Activated CD4-positive, alpha-beta memory T cell treated with anti-CD3 and anti-CD28 coated beads for 36 hours (primary cell): ENCODE measurements at regions of chr7 and their contacts with region 1.

Region 1: DNA sequence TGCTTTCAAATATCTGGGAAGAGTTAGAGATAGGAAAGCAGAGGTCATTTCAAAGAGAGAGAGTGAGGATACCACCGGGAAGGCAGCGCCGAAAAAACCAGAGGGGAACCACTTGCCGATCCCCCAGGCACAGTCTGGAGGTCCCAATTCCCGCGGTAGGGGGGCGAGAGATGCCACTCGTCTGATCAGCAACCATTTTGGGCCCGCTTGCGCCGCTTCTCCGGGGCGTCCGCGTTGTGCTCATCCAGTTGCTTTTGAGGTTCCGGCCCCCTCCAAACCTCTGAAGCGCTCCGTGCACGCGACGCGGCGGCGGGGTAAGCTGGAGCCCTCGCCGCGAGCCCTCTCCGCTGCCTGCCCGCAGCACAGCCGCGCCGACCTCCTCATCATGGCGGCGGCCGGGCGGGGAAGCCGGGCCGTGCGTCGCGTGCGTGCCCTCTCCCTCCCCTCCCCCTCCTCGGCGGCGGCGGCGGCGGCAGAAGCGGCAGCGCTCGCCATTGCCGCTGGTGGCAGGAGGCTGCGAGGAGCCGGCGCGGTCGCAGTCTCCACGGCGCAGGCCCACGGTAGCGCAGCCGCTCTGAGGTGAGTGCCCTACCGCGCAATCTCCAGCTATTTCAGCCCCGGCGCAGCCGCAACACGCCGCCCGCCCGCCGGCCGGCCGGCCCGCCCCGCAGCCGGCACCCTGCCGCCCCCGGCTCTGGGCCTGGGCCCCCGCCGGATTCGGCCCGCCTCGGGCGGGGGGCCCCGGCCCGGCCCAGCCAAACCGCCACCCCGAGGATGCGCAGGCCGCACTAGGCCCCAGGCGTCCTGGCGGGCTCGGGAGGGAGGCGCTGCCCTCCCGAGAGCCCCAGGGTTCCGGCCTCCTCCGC is at the start of gene NRF1:
- DNase-seq: peak; percentile 92
- H3K4me3 Mint-ChIP-seq: peak within 1 kb of the TSS; percentile 95
- H3K27ac Mint-ChIP-seq: peak within 1 kb of the TSS; percentile 97
- H3K4me1 Mint-ChIP-seq: peaks cover 53% of the 10 kb centered on the region
- H3K27me3 Mint-ChIP-seq: no peaks in the 10 kb centered on the region
- total RNA-seq, gene NRF1: 19.9 to 20.4 TPM

Region 2: DNA sequence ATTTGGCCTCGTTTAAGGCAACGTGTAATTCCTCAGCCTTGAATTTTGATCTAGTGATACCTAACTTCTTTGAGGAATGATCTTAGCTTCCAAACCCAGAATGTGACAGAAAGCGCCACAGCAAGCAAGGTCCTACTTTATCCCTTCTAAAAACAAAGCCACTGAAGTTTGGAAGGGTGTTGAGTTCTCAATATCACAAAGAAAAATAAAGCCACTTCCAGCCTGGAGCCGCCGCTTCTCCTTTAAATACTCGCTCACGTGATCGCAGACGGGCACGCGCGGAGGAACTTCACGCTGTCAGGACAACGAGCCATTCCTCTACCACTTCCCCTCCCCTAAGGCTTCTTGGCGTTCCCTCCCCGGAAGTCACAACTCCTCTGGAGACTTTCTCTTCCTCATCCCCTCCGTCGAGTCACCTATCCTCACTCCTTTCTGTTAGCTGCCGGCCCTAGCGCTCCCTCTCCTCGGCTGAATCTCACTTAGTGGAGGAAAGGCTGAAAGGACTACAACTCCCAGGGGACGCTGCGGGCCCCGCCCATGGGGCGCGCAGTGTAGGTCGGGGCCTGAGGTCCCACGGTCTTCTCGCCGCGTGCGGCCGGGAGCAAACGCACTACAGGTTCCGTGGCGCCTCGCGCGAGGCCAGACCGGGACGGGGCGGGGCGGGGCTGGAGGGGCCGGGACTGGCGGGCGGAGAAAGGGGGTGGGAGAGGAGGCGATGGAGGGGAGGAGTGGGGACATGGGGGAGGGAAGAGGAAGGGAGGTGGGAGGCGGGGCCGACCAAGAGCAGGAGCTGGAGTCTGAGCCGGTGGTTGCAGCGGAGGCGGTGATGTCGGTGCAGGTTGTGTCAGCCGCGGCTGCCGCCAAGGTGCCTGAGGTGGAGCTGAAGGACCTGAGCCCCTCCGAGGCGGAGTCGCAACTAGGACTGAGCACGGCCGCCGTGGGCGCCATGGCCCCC is 387.0 kb before region 1 on chr7 and contains the start of gene AHCYL2:
- CTCF ChIA-PET with region 1: no interaction called
- POLR2A ChIA-PET with region 1: no interaction called
- intact Hi-C with region 1: loop called (anchors 5 kb)
- DNase-seq: peak; percentile 99
- H3K4me3 Mint-ChIP-seq: peak within 1 kb of the TSS; percentile 87
- H3K27ac Mint-ChIP-seq: peak within 1 kb of the TSS; percentile 91
- H3K4me1 Mint-ChIP-seq: peaks cover 27% of the 10 kb centered on the region
- H3K27me3 Mint-ChIP-seq: no peaks in the 10 kb centered on the region
- total RNA-seq, gene AHCYL2: 16.4 to 17.1 TPM

Region 3: DNA sequence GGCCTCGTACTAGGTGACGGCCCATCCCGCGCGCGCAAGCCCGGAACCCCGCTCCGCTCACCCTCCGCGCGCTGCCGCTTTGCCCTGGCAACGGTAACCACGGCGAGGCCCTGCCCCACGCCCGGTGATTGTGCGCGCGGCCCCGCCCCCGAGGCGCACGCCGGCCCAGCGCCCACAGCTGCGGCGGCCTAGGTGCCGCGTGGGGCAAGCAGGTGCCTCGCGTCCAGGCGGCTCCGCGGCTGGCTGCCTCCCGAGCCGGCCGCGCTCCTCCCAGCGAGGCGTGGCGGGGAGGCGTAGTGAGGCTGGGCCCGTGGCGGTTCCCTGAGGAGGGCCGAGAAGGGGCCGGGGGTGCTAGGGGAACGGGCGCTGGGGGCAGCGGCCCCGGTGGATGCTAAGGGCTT is 109.1 kb before region 1 on chr7 and contains the start of gene SMKR1:
- CTCF ChIA-PET with region 1: interaction called, 4 read pairs
- POLR2A ChIA-PET with region 1: interaction called, 3 read pairs
- intact Hi-C with region 1: loop called (anchors 5 kb)
- DNase-seq: peak; percentile 91
- H3K4me3 Mint-ChIP-seq: peak within 1 kb of the TSS; percentile 75
- H3K27ac Mint-ChIP-seq: peak within 1 kb of the TSS; percentile 56
- H3K4me1 Mint-ChIP-seq: peaks cover 9% of the 10 kb centered on the region
- H3K27me3 Mint-ChIP-seq: no peaks in the 10 kb centered on the region
- total RNA-seq, gene SMKR1: 1.5 to 2.0 TPM

Region 4: DNA sequence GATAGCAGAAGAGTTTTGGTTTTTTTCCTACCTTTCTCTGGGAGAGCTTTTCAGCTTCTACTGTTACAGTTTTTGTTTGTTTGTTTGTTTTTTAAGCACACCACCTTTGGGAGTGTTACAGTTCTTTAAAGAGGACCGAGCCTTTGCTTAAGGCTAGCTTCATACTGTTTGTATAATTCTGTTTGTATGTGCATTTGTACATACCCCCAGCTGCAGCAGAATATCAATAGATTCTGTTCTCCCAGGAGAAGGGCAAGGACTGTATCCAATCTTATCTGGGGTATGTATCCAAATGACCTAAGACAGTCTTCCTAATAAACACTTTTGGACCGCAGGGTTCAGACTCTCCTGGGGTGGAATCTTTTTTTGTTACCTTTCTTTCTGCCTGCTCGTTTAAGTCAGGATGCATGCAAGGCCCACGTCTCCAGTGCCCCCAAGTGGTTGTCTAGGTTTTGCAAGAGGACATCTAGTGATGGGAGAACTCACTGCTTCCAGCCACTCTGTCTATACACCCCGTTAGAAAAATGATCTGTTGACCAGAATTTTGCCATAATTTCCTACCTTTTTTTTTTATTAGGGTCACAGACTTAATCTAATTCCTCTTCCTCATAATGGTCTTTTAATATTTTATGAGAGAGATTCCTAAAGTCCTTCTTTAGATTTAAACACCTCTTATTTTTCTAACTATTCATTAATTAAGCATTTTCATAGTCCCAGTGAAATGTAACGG is 24.0 kb after region 1 on chr7:
- CTCF ChIA-PET with region 1: interaction called, 37 read pairs
- POLR2A ChIA-PET with region 1: interaction called, 3 read pairs
- intact Hi-C with region 1: loop called (anchors 1 kb)
- DNase-seq: peak; percentile 81
- H3K4me3 Mint-ChIP-seq: no peak overlapping the region
- H3K27ac Mint-ChIP-seq: peak overlapping the region; percentile 16
- H3K4me1 Mint-ChIP-seq: peaks cover 36% of the 10 kb centered on the region
- H3K27me3 Mint-ChIP-seq: no peaks in the 10 kb centered on the region

Region 5: DNA sequence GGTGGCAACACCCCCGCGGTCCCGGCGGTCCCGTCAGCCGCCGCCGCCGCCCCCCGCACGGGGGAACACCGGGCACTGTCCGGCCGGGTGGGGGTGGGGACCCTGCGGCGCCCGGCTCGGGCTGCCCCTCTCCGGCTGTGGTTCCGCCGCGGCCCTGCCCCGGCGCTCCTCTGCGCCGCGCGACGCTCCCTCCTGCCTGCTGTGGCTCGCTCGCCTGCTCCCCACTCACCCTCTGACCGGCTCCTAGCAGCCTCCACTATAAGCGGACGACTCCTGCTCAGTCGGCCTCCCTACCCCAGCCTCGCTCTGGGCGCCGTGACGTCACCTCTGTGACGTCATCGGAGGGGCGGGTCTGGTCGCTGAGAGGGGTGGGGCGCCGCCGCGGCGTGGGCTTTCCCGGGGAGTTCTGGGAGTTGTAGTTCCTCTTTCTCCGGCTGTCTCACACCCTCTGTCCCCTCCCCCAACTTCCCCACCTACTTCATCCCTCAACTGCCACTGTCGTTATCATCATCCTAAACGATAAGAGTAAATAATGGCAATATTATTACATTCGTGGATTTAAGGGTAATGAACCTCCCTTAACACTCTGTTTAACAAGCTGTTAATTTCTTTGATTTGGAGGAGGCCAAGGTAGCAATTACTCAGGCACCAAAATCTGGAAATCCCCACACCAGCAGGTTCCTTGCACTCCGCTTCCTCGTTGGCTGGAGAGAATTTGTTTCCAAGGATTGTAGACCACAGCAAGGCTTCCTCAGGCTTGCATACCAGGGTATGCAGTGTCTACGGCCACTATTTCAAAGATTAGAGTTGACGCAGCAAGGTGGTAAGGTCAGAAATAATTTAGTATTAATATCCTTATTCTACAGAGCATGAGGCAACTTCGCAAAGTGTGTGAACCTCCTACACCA is 341.4 kb after region 1 on chr7 and contains the start of gene UBE2H:
- CTCF ChIA-PET with region 1: no interaction called
- POLR2A ChIA-PET with region 1: no interaction called
- intact Hi-C with region 1: loop called (anchors 5 kb)
- DNase-seq: peak; percentile 94
- H3K4me3 Mint-ChIP-seq: peak within 1 kb of the TSS; percentile 87
- H3K27ac Mint-ChIP-seq: peak within 1 kb of the TSS; percentile 90
- H3K4me1 Mint-ChIP-seq: peaks cover 7% of the 10 kb centered on the region
- H3K27me3 Mint-ChIP-seq: no peaks in the 10 kb centered on the region
- total RNA-seq, gene UBE2H: 33.6 to 37.1 TPM

Region 6: DNA sequence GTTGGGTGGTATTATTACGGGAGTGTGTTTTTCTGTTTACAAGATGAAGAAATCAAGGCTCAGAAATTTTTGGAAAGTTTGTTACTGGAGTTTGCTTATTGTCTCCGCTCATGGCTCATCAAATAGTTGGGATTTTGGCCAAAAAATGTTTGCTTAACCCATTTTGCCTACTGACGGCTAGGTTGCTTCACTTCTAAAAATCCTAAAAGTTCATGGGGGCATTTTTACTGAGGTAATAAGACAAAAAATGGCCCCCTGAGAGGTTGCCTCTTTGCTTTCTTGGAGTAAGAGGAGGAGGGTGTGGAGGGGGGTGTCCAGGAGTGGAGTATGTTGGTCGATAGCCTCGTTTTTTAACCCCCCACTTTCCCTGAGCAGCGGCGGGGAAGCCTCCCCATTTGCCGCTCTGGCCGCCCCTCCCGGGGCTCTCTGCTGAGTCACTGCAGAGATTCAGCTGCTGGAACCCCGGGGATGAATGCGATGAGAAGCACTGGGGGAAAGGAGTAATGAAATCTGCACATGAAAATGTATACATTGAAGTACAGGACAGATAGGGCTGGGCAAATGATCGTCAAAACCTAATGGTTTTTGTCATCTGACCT is 881.9 kb after region 1 on chr7:
- CTCF ChIA-PET with region 1: no interaction called
- POLR2A ChIA-PET with region 1: no interaction called
- intact Hi-C with region 1: no loop called
- DNase-seq: no peak
- H3K4me3 Mint-ChIP-seq: no peak overlapping the region
- H3K27ac Mint-ChIP-seq: no peak overlapping the region
- H3K4me1 Mint-ChIP-seq: peaks cover 11% of the 10 kb centered on the region
- H3K27me3 Mint-ChIP-seq: peaks cover 37% of the 10 kb centered on the region